ENCODE measurements at regions of chr14 and their contacts with region 1.

Region 1: DNA sequence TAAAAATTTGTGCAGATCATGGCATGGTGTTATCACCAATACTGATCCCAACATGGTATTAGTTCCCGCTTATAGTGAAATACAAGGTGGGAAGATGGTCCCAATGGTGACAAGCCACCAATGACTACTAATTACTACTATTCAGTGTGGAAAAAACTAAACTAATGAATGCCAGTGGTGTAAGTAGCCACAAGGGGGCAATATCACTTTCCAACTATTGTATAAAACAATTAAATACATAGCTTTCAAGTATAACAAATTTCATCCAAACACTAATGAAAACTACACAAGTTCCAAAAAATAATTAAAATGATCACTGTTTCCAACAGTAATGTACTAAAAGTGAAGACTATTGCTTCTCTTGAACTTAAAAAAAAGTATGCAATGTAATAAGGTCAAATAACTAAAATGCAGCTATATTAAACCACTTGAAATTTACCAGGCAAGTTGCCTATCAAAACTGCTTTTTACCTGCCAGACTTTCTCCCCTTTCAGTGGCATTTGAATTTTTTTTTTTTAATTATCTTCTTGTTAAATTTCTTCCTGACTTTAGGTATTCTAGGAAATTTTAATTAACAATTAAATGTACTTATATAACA is 58.0 kb downstream of the PAPLN start:
- DNase-seq: peak; percentile 33
- ATAC-seq: peak; percentile 71
- H3K4me3 ChIP-seq: no peak overlapping the region
- H3K27ac ChIP-seq: no peak overlapping the region
- H3K4me1 ChIP-seq: no peaks in the 10 kb centered on the region
- H3K27me3 ChIP-seq: no peaks in the 10 kb centered on the region
- CTCF ChIP-seq: peak; percentile 60 to 85 (median 64); a peak in 5 of 6 replicates
- POLR2A ChIP-seq: no peak
- RAD21 ChIP-seq: peak; percentile 58

Region 2: GRCh38 chr14:72792051-72792788 is 503.1 kb before region 1 on chr14:
- CTCF ChIA-PET with region 1: no interaction called
- POLR2A ChIA-PET with region 1: no interaction called
- RAD21 ChIA-PET with region 1: no interaction called
- intact Hi-C with region 1: no loop called
- DNase-seq: no peak
- ATAC-seq: no peak
- H3K4me3 ChIP-seq: no peak overlapping the region
- H3K27ac ChIP-seq: no peak overlapping the region
- H3K4me1 ChIP-seq: no peaks in the 10 kb centered on the region
- H3K27me3 ChIP-seq: peaks cover 8% of the 10 kb centered on the region; the same call in 1 of the 2 replicates
- CTCF ChIP-seq: no peak
- POLR2A ChIP-seq: no peak
- RAD21 ChIP-seq: no peak

Region 3: DNA sequence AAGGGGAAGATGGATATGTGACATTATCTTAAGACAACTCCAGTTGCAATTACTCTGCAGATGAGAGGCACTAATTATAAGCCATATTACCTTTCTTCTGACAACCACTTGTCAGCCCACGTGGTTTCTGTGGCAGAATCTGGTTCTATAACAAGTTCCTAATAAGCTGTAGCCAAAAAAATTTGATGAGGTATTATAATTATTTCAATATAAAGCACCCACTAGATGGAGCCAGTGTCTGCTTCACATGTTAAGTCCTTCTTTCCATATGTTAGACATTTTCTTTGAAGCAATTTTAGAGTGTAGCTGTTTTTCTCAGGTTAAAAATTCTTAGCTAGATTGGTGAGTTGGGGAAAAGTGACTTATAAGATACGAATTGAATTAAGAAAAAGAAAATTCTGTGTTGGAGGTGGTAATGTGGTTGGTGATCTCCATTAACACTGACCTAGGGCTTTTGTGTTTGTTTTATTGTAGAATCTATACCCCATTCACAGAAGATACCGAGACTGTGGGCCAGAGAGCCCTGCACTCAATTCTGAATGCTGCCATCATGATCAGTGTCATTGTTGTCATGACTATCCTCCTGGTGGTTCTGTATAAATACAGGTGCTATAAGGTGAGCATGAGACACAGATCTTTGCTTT is 122.1 kb before region 1 on chr14:
- CTCF ChIA-PET with region 1: interaction called, 6 read pairs
- POLR2A ChIA-PET with region 1: no interaction called
- RAD21 ChIA-PET with region 1: no interaction called
- intact Hi-C with region 1: loop called (anchors 5 kb)
- DNase-seq: peak; percentile 31
- ATAC-seq: peak; percentile 52; the same call in 1 of the 2 replicates
- H3K4me3 ChIP-seq: no peak overlapping the region
- H3K27ac ChIP-seq: no peak overlapping the region
- H3K4me1 ChIP-seq: no peaks in the 10 kb centered on the region
- H3K27me3 ChIP-seq: no peaks in the 10 kb centered on the region
- CTCF ChIP-seq: peak; percentile 36 to 63 (median 57); a peak in 5 of 6 replicates
- POLR2A ChIP-seq: no peak
- RAD21 ChIP-seq: peak; percentile 64

Region 4: DNA sequence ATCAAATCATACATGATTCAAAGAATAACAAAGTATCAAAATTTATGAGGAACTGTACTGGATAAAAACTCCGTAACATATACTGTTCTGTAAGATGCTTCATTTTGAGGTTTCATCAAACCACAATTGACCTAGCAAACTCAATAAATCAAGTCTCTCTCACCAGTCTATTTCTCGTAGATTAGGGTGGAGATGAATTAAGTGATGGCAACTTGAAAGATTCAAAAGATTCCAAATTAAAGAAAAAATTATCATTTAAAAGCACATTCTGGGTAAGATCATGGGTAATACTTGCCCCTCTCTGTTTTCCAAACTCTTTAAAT is 16.4 kb after region 1 on chr14:
- CTCF ChIA-PET with region 1: interaction called, 18 read pairs
- POLR2A ChIA-PET with region 1: no interaction called
- RAD21 ChIA-PET with region 1: no interaction called
- intact Hi-C with region 1: no loop called
- DNase-seq: no peak
- ATAC-seq: no peak
- H3K4me3 ChIP-seq: no peak overlapping the region
- H3K27ac ChIP-seq: no peak overlapping the region
- H3K4me1 ChIP-seq: peaks cover 0 to 5% of the 10 kb centered on the region in 2 experiments; a peak in 2 of 4 replicates
- H3K27me3 ChIP-seq: no peaks in the 10 kb centered on the region
- CTCF ChIP-seq: no peak
- POLR2A ChIP-seq: no peak
- RAD21 ChIP-seq: no peak

Region 5: DNA sequence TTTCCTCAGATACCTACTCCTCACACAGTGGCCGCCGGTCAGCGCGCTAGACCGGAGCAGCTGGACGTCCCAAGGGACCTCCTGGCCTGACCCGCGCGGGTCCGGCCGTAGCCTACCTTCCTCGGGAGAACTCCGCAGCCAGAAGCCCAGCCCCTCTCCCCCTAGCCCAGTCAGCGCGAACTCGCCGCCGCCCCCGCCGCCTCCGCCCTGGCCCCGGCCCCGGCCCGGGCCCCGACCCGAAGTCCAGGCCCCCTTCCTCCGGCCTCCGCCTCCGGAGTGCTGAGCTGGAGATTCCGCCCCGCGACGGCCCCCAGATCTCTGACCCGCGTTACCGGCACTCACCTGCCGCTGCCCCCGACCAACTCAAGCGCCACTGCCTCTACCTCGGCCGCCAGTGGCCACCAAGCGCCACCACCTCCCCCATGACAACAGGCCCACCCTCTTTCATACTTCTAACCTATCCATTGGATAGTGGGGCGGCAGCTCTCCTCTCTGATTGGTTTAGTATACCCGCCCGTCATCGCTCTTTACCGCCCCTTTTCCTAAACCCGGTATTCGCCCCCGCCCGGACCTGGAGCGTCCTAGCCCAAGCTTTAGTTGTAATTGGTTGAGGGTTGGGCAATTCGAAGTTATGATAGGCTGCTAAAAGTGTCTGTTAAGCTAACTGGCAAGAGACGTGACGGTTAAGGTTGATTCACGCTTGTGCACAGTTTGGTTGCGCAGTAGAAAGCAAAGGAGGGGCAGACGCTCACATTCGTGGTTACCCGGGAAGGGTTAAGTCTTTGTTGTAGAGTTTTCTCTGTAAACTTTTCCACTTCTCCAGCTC is 163.1 kb after region 1 on chr14 and contains the start of gene NUMB:
- CTCF ChIA-PET with region 1: interaction called, 11 read pairs
- POLR2A ChIA-PET with region 1: no interaction called
- RAD21 ChIA-PET with region 1: interaction called in 1 of 2 experiments, 4 read pairs
- intact Hi-C with region 1: no loop called
- DNase-seq: peak; percentile 100
- ATAC-seq: peak; percentile 96
- H3K4me3 ChIP-seq: peak within 1 kb of the TSS; percentile 88 to 90
- H3K27ac ChIP-seq: peak within 1 kb of the TSS; percentile 62
- H3K4me1 ChIP-seq: peaks cover 6 to 19% of the 10 kb centered on the region in 2 experiments; a peak in 3 of 4 replicates
- H3K27me3 ChIP-seq: no peaks in the 10 kb centered on the region
- CTCF ChIP-seq: no peak
- POLR2A ChIP-seq: peak; percentile 85
- RAD21 ChIP-seq: no peak
- total RNA-seq, gene NUMB: 43.0 TPM

Region 6: GRCh38 chr14:73472185-73473114 is 177.2 kb after region 1 on chr14:
- CTCF ChIA-PET with region 1: interaction called, 98 read pairs
- POLR2A ChIA-PET with region 1: interaction called, 4 read pairs
- RAD21 ChIA-PET with region 1: interaction called, 15 to 24 read pairs
- intact Hi-C with region 1: loop called (anchors 1 kb)
- DNase-seq: peak; percentile 60
- ATAC-seq: peak; percentile 89
- H3K4me3 ChIP-seq: no peak overlapping the region
- H3K27ac ChIP-seq: no peak overlapping the region
- H3K4me1 ChIP-seq: no peaks in the 10 kb centered on the region
- H3K27me3 ChIP-seq: no peaks in the 10 kb centered on the region
- CTCF ChIP-seq: peak; percentile 54 to 78 (median 75)
- POLR2A ChIP-seq: no peak
- RAD21 ChIP-seq: peak; percentile 93

Region 7: GRCh38 chr14:73633116-73634010 is 338.1 kb after region 1 on chr14:
- CTCF ChIA-PET with region 1: interaction called, 14 read pairs
- POLR2A ChIA-PET with region 1: no interaction called
- RAD21 ChIA-PET with region 1: no interaction called
- intact Hi-C with region 1: loop called (anchors 1 kb)
- DNase-seq: no peak
- ATAC-seq: peak; percentile 92
- H3K4me3 ChIP-seq: peak overlapping the region in 1 of 2 experiments; percentile 11; a peak in 1 of 4 replicates
- H3K27ac ChIP-seq: no peak overlapping the region
- H3K4me1 ChIP-seq: peaks cover 0 to 8% of the 10 kb centered on the region in 2 experiments; a peak in 1 of 4 replicates
- H3K27me3 ChIP-seq: no peaks in the 10 kb centered on the region
- CTCF ChIP-seq: peak; percentile 79 to 86 (median 81)
- POLR2A ChIP-seq: no peak
- RAD21 ChIP-seq: peak; percentile 80

Region 8: GRCh38 chr14:74147571-74147970 is 852.3 kb after region 1 on chr14:
- CTCF ChIA-PET with region 1: no interaction called
- POLR2A ChIA-PET with region 1: no interaction called
- RAD21 ChIA-PET with region 1: no interaction called
- intact Hi-C with region 1: no loop called
- DNase-seq: no peak
- ATAC-seq: no peak
- H3K4me3 ChIP-seq: no peak overlapping the region
- H3K27ac ChIP-seq: no peak overlapping the region
- H3K4me1 ChIP-seq: no peaks in the 10 kb centered on the region
- H3K27me3 ChIP-seq: no peaks in the 10 kb centered on the region
- CTCF ChIP-seq: no peak
- POLR2A ChIP-seq: no peak
- RAD21 ChIP-seq: no peak